Activated CD4-positive, alpha-beta T cell treated with anti-CD3 and anti-CD28 coated beads for 36 hours (primary cell): ENCODE measurements at regions of chr16 and their contacts with region 1.

Region 1: GRCh38 chr16:31073968-31074813 is at the starts of genes ZNF646 and ZNF668:
- DNase-seq: peak; percentile 99
- ATAC-seq: peak; percentile 83
- H3K4me3 Mint-ChIP-seq: peak within 1 kb of the TSS; percentile 97
- H3K27ac Mint-ChIP-seq: peak within 1 kb of the TSS; percentile 98
- H3K4me1 Mint-ChIP-seq: peaks cover 30% of the 10 kb centered on the region
- H3K27me3 Mint-ChIP-seq: no peaks in the 10 kb centered on the region
- total RNA-seq, gene ZNF646: 21.3 to 25.8 TPM
- total RNA-seq, gene ZNF668: 9.2 to 9.9 TPM

Region 2: DNA sequence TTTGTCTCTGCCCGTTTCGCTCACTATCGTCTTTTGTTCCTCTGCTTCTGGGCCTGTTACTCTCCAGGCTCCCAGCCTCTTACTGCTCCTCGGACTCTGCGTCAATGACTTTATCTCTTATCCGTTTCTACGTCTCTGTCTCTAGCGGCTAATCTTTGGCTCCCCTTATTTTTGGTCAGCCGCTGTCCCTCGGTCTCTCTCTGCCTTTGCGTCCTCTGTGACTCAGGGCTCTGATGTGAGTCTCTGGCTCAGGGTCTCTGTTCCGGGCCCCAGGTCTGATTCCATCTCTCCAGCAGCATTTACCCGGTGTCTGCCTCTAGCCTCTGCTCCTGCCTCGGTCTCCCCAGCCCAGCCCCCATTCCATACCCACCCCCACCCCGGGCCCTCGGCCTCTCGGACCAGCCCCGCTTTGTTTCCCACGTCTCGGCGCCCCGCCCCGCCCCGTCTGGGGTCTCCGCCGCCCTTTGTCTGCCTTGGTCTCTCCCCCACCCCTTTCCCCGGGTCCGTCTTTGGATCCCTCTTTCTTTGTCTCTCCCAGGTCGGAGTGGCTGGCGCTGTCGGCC is 679.5 kb before region 1 on chr16:
- CTCF ChIA-PET with region 1: no interaction called
- POLR2A ChIA-PET with region 1: no interaction called
- intact Hi-C with region 1: no loop called
- DNase-seq: no peak
- ATAC-seq: peak; percentile 6
- H3K4me3 Mint-ChIP-seq: peak overlapping the region; percentile 81
- H3K27ac Mint-ChIP-seq: peak overlapping the region; percentile 39
- H3K4me1 Mint-ChIP-seq: peaks cover 23% of the 10 kb centered on the region
- H3K27me3 Mint-ChIP-seq: no peaks in the 10 kb centered on the region

Region 3: GRCh38 chr16:30747799-30748634 is 326.2 kb before region 1 on chr16 and contains the start of gene PHKG2:
- CTCF ChIA-PET with region 1: no interaction called
- POLR2A ChIA-PET with region 1: interaction called, 11 read pairs
- intact Hi-C with region 1: loop called in 1 of 2 experiments (anchors 5 kb)
- DNase-seq: peak; percentile 99
- ATAC-seq: peak; percentile 99
- H3K4me3 Mint-ChIP-seq: peak within 1 kb of the TSS; percentile 88
- H3K27ac Mint-ChIP-seq: peak within 1 kb of the TSS; percentile 88
- H3K4me1 Mint-ChIP-seq: peaks cover 21% of the 10 kb centered on the region
- H3K27me3 Mint-ChIP-seq: no peaks in the 10 kb centered on the region
- total RNA-seq, gene PHKG2: 21.8 to 26.0 TPM

Region 4: DNA sequence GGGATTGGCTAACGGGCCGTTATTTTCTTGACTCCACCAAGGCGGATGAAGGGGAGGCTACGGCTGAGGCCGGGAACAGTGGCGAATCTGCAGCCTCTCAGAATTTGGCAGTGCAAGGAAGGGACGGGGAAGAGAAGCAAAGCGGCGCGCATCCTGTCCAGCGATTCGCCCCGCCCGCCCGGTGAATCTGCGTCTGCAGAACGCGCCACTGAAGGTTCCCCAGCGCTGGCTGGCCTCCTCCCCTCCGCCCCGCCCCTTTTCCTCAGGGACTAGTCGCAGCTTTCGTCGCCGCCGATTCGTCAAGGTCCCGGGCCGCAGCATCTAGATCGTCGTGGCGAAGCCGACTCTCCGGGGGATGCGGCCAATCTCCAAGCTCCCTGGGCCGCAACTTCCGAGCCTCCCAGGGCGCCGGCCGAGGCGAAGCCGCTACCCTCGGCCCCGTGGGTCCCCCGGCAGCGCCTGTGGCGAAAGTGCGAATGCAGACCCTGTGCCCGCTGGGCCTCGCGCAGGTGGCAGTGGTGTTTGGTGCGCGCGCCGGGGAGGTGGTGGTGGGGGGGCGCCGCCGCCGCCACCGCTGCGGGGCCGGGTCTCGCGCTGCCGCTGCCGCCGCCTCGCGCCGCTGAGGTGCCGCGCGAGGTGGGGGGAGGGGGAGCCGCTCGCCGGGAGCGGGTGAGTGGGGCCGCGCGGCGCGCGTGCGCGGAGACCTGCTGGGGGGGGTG is 116.6 kb before region 1 on chr16 and contains the start of gene SETD1A:
- CTCF ChIA-PET with region 1: interaction called, 3 read pairs
- POLR2A ChIA-PET with region 1: no interaction called
- intact Hi-C with region 1: loop called (anchors 1 kb)
- DNase-seq: peak; percentile 99
- ATAC-seq: peak; percentile 89
- H3K4me3 Mint-ChIP-seq: peak within 1 kb of the TSS; percentile 93
- H3K27ac Mint-ChIP-seq: peak within 1 kb of the TSS; percentile 99
- H3K4me1 Mint-ChIP-seq: peaks cover 37% of the 10 kb centered on the region
- H3K27me3 Mint-ChIP-seq: no peaks in the 10 kb centered on the region
- total RNA-seq, gene SETD1A: 18.5 to 21.7 TPM

Region 5: DNA sequence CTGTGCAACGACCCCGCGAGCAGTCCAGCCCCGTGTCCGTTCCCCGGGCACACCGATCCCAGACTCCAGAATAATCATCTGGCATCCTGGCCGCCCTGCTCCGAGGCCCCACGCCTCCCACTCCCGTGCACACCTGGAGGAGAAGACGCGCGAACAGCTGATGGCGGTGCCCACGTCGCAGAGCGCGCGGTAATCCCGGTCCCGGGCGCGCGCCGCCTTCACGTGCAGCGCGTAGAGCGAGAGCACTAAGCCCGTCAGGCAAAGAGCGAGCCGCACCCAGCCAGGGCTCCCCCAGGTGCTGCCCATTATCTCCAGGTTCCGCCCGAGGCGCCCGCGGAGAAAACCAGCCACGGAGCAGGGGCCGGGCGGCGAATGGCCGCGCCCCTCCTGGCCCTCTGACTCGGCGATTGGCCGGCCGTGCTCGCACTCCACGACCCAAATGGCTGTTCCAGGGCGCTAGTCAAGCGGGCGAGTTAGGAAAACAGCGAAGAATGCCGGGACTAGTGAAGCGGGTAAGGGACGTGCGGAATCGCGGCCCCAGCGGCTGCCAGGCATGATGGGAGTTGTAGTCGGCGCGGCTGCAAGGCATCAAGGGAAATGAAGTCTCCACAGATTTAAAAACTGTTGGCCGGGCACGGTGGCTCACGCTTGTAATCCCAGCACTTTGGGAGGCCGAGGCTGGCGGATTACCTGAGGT is 20.4 kb after region 1 on chr16 and contains the start of gene VKORC1:
- CTCF ChIA-PET with region 1: interaction called, 7 read pairs
- POLR2A ChIA-PET with region 1: interaction called, 4 read pairs
- intact Hi-C with region 1: loop called (anchors 1 kb)
- DNase-seq: peak; percentile 96
- ATAC-seq: peak; percentile 92
- H3K4me3 Mint-ChIP-seq: peak within 1 kb of the TSS; percentile 98
- H3K27ac Mint-ChIP-seq: peak within 1 kb of the TSS; percentile 89
- H3K4me1 Mint-ChIP-seq: peaks cover 25% of the 10 kb centered on the region
- H3K27me3 Mint-ChIP-seq: no peaks in the 10 kb centered on the region
- total RNA-seq, gene VKORC1: 59.6 to 64.2 TPM

Region 6: GRCh38 chr16:31179747-31180459 is 105.7 kb after region 1 on chr16 and contains the start of gene FUS:
- CTCF ChIA-PET with region 1: no interaction called
- POLR2A ChIA-PET with region 1: interaction called, 12 read pairs
- intact Hi-C with region 1: loop called (anchors 1 kb)
- DNase-seq: peak; percentile 94
- ATAC-seq: peak; percentile 56
- H3K4me3 Mint-ChIP-seq: peak within 1 kb of the TSS; percentile 95
- H3K27ac Mint-ChIP-seq: peak within 1 kb of the TSS; percentile 99
- H3K4me1 Mint-ChIP-seq: peaks cover 51% of the 10 kb centered on the region
- H3K27me3 Mint-ChIP-seq: no peaks in the 10 kb centered on the region
- total RNA-seq, gene FUS: 647 to 648 TPM

Region 7: DNA sequence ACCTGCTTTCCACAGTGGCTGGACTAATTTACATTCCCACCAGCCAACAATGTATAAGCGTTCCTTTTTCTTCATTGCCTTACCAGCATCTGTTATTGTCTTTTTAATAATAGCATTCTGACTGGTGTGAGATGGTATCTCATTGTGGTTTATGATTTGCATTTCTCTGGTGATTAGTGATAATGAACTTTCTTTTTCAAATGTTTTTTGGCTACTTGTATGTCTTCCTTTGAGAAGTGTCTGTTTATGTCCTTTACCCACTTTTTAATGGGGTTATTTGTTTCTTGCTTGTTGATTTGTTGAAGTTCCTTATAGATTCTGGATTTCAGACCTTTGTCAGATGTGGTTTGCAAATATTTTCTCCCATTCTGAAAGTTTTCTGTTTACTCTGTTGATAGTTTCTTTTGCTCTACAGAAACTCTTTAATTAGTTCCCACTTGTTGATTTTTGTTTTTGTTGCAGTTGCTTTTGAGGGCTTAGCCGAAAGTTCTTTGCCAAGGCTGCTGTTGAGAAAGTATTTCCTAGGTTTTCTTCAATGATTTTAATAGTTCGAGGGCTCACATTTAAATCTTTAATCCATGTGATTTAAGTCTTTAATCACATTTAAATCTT is 212.3 kb after region 1 on chr16:
- CTCF ChIA-PET with region 1: no interaction called
- POLR2A ChIA-PET with region 1: no interaction called
- intact Hi-C with region 1: no loop called
- DNase-seq: no peak
- ATAC-seq: peak; percentile 42
- H3K4me3 Mint-ChIP-seq: no peak overlapping the region
- H3K27ac Mint-ChIP-seq: no peak overlapping the region
- H3K4me1 Mint-ChIP-seq: peaks cover 6% of the 10 kb centered on the region
- H3K27me3 Mint-ChIP-seq: peaks cover 12% of the 10 kb centered on the region

Region 8: GRCh38 chr16:31700526-31701388 is 626.6 kb after region 1 on chr16:
- CTCF ChIA-PET with region 1: no interaction called
- POLR2A ChIA-PET with region 1: no interaction called
- intact Hi-C with region 1: loop called in 1 of 2 experiments (anchors 1 kb)
- DNase-seq: peak; percentile 94
- ATAC-seq: peak; percentile 87
- H3K4me3 Mint-ChIP-seq: peak overlapping the region; percentile 92
- H3K27ac Mint-ChIP-seq: peak overlapping the region; percentile 96
- H3K4me1 Mint-ChIP-seq: peaks cover 26% of the 10 kb centered on the region
- H3K27me3 Mint-ChIP-seq: no peaks in the 10 kb centered on the region